ENCODE measurements at regions of chr18 and their contacts with region 1.

Region 1: DNA sequence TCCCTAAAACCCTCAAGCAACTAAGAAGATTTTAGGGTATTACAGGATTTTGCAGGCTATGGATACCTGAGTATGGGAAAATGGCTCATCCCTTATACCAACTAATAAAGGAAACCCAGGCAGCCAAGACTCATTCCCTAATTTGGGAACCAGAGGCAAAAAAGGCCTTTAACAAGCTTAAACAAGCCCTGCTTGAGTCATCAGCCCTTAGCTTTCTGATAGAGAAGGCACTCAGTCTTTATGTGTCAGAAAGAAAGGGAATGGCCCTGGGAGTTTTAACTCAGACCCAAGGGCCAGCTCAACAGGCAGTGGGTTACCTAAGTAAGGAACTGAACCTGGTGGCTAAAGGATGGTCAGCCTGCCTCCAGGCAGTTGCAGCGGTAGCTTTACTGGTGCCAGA is 96.9 kb upstream of the RMP24 start:
- DNase-seq: no peak
- ATAC-seq: no peak
- H3K4me3 Mint-ChIP-seq: no peak overlapping the region
- H3K27ac Mint-ChIP-seq: no peak overlapping the region
- H3K4me1 Mint-ChIP-seq: no peaks in the 10 kb centered on the region
- H3K27me3 Mint-ChIP-seq: no peaks in the 10 kb centered on the region

Region 2: GRCh38 chr18:35827275-35827902 is 48.2 kb before region 1 on chr18:
- CTCF ChIA-PET with region 1: no interaction called
- POLR2A ChIA-PET with region 1: no interaction called
- intact Hi-C with region 1: no loop called
- DNase-seq: peak; percentile 22
- ATAC-seq: peak; percentile 92
- H3K4me3 Mint-ChIP-seq: no peak overlapping the region
- H3K27ac Mint-ChIP-seq: no peak overlapping the region
- H3K4me1 Mint-ChIP-seq: peaks cover 8% of the 10 kb centered on the region
- H3K27me3 Mint-ChIP-seq: peaks cover 12% of the 10 kb centered on the region

Region 3: GRCh38 chr18:35939138-35939537 is 63.6 kb after region 1 on chr18:
- CTCF ChIA-PET with region 1: no interaction called
- POLR2A ChIA-PET with region 1: no interaction called
- intact Hi-C with region 1: loop called in 1 of 2 experiments (anchors 10 kb)
- DNase-seq: no peak
- ATAC-seq: no peak
- H3K4me3 Mint-ChIP-seq: no peak overlapping the region
- H3K27ac Mint-ChIP-seq: no peak overlapping the region
- H3K4me1 Mint-ChIP-seq: no peaks in the 10 kb centered on the region
- H3K27me3 Mint-ChIP-seq: peaks cover 5% of the 10 kb centered on the region

Measured in activated CD4-positive, alpha-beta T cell treated with anti-CD3 and anti-CD28 coated beads for 36 hours (primary cell).